ENCODE measurements at regions of chr17 and their contacts with region 1.

Region 1: DNA sequence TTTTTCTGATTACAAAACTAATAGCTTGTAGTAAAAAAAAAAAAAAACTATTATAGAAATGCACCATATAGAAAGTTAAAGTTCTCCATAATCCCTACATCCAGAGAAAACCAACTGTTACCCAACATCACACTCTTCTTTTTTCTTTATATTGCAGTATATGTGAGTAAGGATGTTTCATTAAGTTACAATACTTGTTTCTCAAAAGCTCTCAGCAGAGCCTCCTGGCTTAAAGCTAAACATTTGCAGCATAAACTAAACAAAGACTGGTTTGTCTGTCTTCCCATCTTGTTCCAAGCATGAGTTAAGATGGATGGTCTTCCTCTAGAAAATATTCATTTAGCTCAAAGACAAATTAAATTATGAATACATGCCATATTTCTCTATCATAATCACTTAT is 25.2 kb downstream of the GRB2 start:
- DNase-seq: no peak
- ATAC-seq: no peak
- H3K4me3 ChIP-seq: no peak overlapping the region
- H3K27ac ChIP-seq: no peak overlapping the region
- H3K4me1 ChIP-seq: peaks cover 24% of the 10 kb centered on the region
- CTCF ChIP-seq: no peak
- EP300 ChIP-seq: no peak
- POLR2A ChIP-seq: no peak
- RAD21 ChIP-seq: no peak

Region 2: DNA sequence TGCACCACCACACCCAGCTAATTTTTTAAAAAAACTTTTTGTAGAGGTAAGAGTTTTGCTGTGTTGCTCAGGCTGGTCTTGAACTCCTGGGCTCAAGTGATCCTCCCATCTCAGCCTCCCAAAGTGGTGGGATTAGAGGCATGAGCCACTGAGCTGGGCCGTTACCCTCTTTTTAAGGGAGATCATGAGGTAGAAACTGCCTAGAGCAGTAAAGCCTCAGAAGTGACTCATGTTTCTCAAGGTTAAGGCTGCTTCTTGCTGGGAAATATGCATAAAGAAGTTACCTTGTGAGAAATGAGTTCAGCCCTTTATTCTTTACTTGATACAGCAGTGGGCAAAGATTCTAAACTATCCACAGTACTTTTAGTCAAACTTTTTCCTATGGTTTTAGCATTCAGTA is 13.0 kb before region 1 on chr17:
- CTCF ChIA-PET with region 1: interaction called, 15 read pairs
- POLR2A ChIA-PET with region 1: no interaction called
- DNase-seq: peak; percentile 30 to 40
- ATAC-seq: peak; percentile 38 to 57; a peak in 2 of 6 replicates
- H3K4me3 ChIP-seq: no peak overlapping the region
- H3K27ac ChIP-seq: 0 out of 6 replicates have a peak overlapping the region, but pooled peaks of 1 of the 2 experiments have one; percentile 0
- H3K4me1 ChIP-seq: peaks cover 65% of the 10 kb centered on the region
- CTCF ChIP-seq: no peak
- EP300 ChIP-seq: no peak
- POLR2A ChIP-seq: no peak
- RAD21 ChIP-seq: no peak